Mammary epithelial cell (primary cell): ENCODE measurements at regions of chr11 and their contacts with region 1.

Region 1: GRCh38 chr11:59142530-59143507 is at the start of gene FAM111A:
- DNase-seq: peak; percentile 97
- H3K4me3 ChIP-seq: peak within 1 kb of the TSS; percentile 77 to 88 (median 78)
- H3K27ac ChIP-seq: peak within 1 kb of the TSS; percentile 91
- H3K4me1 ChIP-seq: peaks cover 20% of the 10 kb centered on the region
- H3K27me3 ChIP-seq: no peaks in the 10 kb centered on the region
- CTCF ChIP-seq: peak in 1 of 2 donors; percentile 35
- total RNA-seq, gene FAM111A: 17.8 to 35.8 TPM

Region 2: GRCh38 chr11:58446294-58446693 is 696.5 kb before region 1 on chr11:
- CTCF ChIA-PET with region 1: no interaction called
- dilution Hi-C with region 1: no loop called
- in situ Hi-C with region 1: no loop called
- intact Hi-C with region 1: no loop called
- DNase-seq: no peak
- H3K4me3 ChIP-seq: no peak overlapping the region
- H3K27ac ChIP-seq: no peak overlapping the region
- H3K4me1 ChIP-seq: peaks cover 5% of the 10 kb centered on the region
- H3K27me3 ChIP-seq: peaks cover 3% of the 10 kb centered on the region
- CTCF ChIP-seq: no peak

Region 3: GRCh38 chr11:58629857-58630256 is 513.0 kb before region 1 on chr11:
- CTCF ChIA-PET with region 1: no interaction called
- dilution Hi-C with region 1: no loop called
- in situ Hi-C with region 1: loop called in 1 of 2 experiments (anchors 25 kb)
- intact Hi-C with region 1: no loop called
- DNase-seq: peak; percentile 42
- H3K4me3 ChIP-seq: no peak overlapping the region
- H3K27ac ChIP-seq: no peak overlapping the region
- H3K4me1 ChIP-seq: peaks cover 32% of the 10 kb centered on the region
- H3K27me3 ChIP-seq: no peaks in the 10 kb centered on the region
- CTCF ChIP-seq: peak; percentile 43 to 72

Region 4: GRCh38 chr11:59106363-59107336 is 36.2 kb before region 1 on chr11 and contains the start of gene FAM111B:
- CTCF ChIA-PET with region 1: no interaction called
- dilution Hi-C with region 1: no loop called
- in situ Hi-C with region 1: no loop called
- intact Hi-C with region 1: loop called (anchors 2 kb)
- DNase-seq: peak; percentile 97
- H3K4me3 ChIP-seq: peak within 1 kb of the TSS; percentile 55 to 60 (median 60)
- H3K27ac ChIP-seq: peak within 1 kb of the TSS; percentile 5
- H3K4me1 ChIP-seq: peaks cover 9% of the 10 kb centered on the region
- H3K27me3 ChIP-seq: no peaks in the 10 kb centered on the region
- CTCF ChIP-seq: peak in 1 of 2 donors; percentile 29
- total RNA-seq, gene FAM111B: 3.2 to 19.3 TPM

Region 5: GRCh38 chr11:59158206-59159068 is 15.6 kb after region 1 on chr11:
- CTCF ChIA-PET with region 1: interaction called, 8 read pairs
- dilution Hi-C with region 1: no loop called
- in situ Hi-C with region 1: no loop called
- intact Hi-C with region 1: loop called (anchors 1 kb)
- DNase-seq: peak; percentile 52
- H3K4me3 ChIP-seq: no peak overlapping the region
- H3K27ac ChIP-seq: no peak overlapping the region
- H3K4me1 ChIP-seq: no peaks in the 10 kb centered on the region
- H3K27me3 ChIP-seq: no peaks in the 10 kb centered on the region
- CTCF ChIP-seq: peak; percentile 83 to 86